ENCODE measurements at regions of chr1 and their contacts with region 1.

Region 1: GRCh38 chr1:196180847-196181593 is 427.2 kb downstream of the KCNT2 start:
- DNase-seq: peak; percentile 59
- ATAC-seq: peak; percentile 65; the same call in 1 of the 2 replicates
- H3K4me3 ChIP-seq: no peak overlapping the region
- H3K27ac ChIP-seq: no peak overlapping the region
- H3K4me1 ChIP-seq: no peaks in the 10 kb centered on the region
- H3K27me3 ChIP-seq: no peaks in the 10 kb centered on the region
- CTCF ChIP-seq: no peak

Region 2: DNA sequence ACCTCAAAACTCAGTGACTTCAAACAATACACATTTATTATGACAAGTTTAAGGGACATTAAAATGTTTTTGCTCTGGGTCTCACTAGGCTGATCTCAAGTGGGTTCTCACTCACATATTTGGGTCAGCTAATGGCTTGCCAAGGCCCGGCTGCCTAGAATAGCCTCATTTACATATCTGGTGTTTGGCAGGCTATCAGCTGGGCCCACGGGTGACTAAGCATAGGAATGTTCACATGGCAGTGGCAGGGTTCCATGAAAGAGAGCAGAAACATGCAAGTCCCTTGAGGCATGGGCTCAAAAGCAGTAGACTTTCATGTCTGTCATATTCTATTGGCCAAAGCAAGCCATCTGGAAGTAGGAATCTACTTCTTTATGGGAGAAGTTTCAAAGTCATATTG is 65.4 kb before region 1 on chr1:
- CTCF ChIA-PET with region 1: no interaction called
- POLR2A ChIA-PET with region 1: interaction called, 18 read pairs
- in situ Hi-C with region 1: no loop called
- intact Hi-C with region 1: no loop called
- DNase-seq: no peak
- ATAC-seq: no peak
- H3K4me3 ChIP-seq: no peak overlapping the region
- H3K27ac ChIP-seq: no peak overlapping the region
- H3K4me1 ChIP-seq: no peaks in the 10 kb centered on the region
- H3K27me3 ChIP-seq: no peaks in the 10 kb centered on the region
- CTCF ChIP-seq: no peak

Measured in Panc1 (cell line).